Kidney (tissue), 22 donors: ENCODE measurements at regions of chr1 and their contacts with region 1.

Region 1: GRCh38 chr1:209850342-209850979 is 22.7 kb downstream of the UTP25 start:
- DNase-seq: peak in 3 of 5 donors; percentile 13 to 39 (median 37)
- H3K4me3 ChIP-seq: no peak overlapping the region
- H3K27ac ChIP-seq: no peak overlapping the region
- H3K4me1 ChIP-seq: no peaks in the 10 kb centered on the region
- H3K27me3 ChIP-seq: no peaks in the 10 kb centered on the region
- CTCF ChIP-seq: peak; percentile 39

Region 2: GRCh38 chr1:209993061-209993830 is 142.8 kb after region 1 on chr1:
- intact Hi-C with region 1: loop called (anchors 5 kb)
- DNase-seq: peak in 1 of 5 donors; percentile 1
- H3K4me3 ChIP-seq: no peak overlapping the region
- H3K27ac ChIP-seq: no peak overlapping the region
- H3K4me1 ChIP-seq: no peaks in the 10 kb centered on the region
- H3K27me3 ChIP-seq: no peaks in the 10 kb centered on the region
- CTCF ChIP-seq: no peak